Mammary epithelial cell (primary cell): ENCODE measurements at regions of chr11 and their contacts with region 1.

Region 1: GRCh38 chr11:120554766-120555432 is 43.4 kb downstream of the GRIK4 start:
- DNase-seq: no peak
- H3K4me3 ChIP-seq: no peak overlapping the region
- H3K27ac ChIP-seq: no peak overlapping the region
- H3K4me1 ChIP-seq: no peaks in the 10 kb centered on the region
- H3K27me3 ChIP-seq: no peaks in the 10 kb centered on the region
- CTCF ChIP-seq: no peak

Region 2: DNA sequence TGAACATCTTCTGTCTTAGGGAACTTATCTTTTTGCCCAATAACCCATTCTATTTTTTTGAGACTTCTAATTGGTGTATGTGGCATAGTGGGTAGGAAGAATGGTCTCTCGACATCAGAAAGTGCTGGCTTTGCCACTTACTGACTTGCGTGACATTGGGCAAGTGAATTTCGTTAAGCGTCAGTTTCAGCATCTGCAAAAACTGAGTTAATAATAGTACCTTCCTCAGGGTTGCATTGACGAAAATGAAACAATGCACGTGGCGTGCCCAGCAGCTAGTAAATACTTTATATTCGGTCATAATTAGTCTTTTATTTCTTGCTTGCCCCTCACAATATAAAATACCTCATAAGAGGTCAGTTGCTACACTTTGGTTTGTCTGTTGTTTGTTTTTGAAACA is 55.8 kb before region 1 on chr11:
- CTCF ChIA-PET with region 1: no interaction called
- dilution Hi-C with region 1: loop called (anchors 5 kb)
- in situ Hi-C with region 1: no loop called
- intact Hi-C with region 1: no loop called
- DNase-seq: no peak
- H3K4me3 ChIP-seq: no peak overlapping the region
- H3K27ac ChIP-seq: no peak overlapping the region
- H3K4me1 ChIP-seq: no peaks in the 10 kb centered on the region
- H3K27me3 ChIP-seq: peaks cover 3% of the 10 kb centered on the region
- CTCF ChIP-seq: no peak

Region 3: DNA sequence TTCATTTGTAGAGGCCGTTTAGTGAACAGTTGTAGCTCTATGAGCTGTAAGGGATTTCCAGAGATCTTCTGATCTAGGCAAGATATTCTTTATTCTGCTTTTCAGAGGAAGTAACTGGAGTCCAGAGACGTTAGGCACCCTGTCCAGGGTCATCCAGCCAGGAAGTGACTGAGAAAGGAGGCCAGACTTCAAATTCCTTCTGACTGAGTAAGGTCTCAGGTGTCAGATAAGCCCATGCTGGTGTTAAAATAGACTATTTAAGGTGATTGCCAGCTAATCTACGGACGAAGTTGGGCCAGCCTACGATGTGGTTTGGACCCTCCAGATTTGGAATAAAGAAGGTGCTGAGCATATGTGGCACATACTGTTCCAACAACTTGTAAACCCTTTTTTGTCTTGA is 11.3 kb after region 1 on chr11:
- CTCF ChIA-PET with region 1: no interaction called
- dilution Hi-C with region 1: no loop called
- in situ Hi-C with region 1: no loop called
- intact Hi-C with region 1: no loop called
- DNase-seq: peak; percentile 48
- H3K4me3 ChIP-seq: no peak overlapping the region
- H3K27ac ChIP-seq: no peak overlapping the region
- H3K4me1 ChIP-seq: peaks cover 22% of the 10 kb centered on the region
- H3K27me3 ChIP-seq: peaks cover 2% of the 10 kb centered on the region
- CTCF ChIP-seq: no peak

Region 4: GRCh38 chr11:120830085-120830620 is 275.3 kb after region 1 on chr11:
- CTCF ChIA-PET with region 1: no interaction called
- dilution Hi-C with region 1: no loop called
- in situ Hi-C with region 1: no loop called
- intact Hi-C with region 1: no loop called
- DNase-seq: no peak
- H3K4me3 ChIP-seq: no peak overlapping the region
- H3K27ac ChIP-seq: no peak overlapping the region
- H3K4me1 ChIP-seq: no peaks in the 10 kb centered on the region
- H3K27me3 ChIP-seq: no peaks in the 10 kb centered on the region
- CTCF ChIP-seq: no peak